AG04450 (cell line): ENCODE measurements at regions of chr3 and their contacts with region 1.

Region 1: DNA sequence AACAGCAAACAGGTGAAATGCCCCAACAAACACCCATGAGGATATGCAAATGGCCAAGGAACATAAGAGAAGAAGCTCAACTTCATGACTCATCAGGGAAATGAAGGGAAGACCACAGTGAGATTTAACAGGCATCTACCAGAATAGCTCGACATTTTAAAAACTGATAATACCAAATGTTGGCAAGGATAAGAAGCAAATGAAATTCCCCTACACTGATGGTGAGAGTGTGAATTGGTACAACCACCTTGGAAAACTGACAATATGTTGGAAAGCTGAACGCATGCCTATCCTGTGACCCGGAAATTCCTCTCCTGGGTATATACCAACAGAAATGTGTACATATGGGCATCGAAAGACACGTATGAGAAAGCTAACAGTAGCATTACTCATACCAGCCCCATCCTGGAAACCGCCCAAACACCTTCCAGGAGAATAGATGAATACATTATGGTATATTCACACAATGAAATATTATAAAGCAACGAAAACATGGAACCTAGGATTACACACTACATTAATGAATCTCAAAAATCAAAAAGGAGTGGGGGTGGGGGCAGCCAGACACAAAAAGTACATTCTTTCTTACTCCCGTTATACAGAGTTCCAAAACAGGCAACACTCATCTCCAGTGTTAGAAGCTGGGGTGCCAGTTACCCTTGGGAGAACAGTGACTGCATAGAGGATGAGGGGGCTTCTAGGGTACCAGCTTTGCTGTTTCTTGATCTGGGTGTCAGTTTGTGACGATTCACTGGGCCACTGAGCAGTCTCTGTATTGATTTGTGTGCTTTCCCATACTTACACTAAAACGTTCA is 16.9 kb downstream of the RFTN1 start:
- DNase-seq: no peak
- H3K4me3 ChIP-seq: no peak overlapping the region
- H3K27ac ChIP-seq: no peak overlapping the region
- H3K27me3 ChIP-seq: no peaks in the 10 kb centered on the region
- CTCF ChIP-seq: no peak

Region 2: GRCh38 chr3:16349986-16350596 is 146.5 kb before region 1 on chr3:
- CTCF ChIA-PET with region 1: no interaction called
- POLR2A ChIA-PET with region 1: no interaction called
- DNase-seq: peak; percentile 58
- H3K4me3 ChIP-seq: no peak overlapping the region
- H3K27ac ChIP-seq: peak overlapping the region; percentile 75
- H3K27me3 ChIP-seq: no peaks in the 10 kb centered on the region
- CTCF ChIP-seq: no peak

Region 3: DNA sequence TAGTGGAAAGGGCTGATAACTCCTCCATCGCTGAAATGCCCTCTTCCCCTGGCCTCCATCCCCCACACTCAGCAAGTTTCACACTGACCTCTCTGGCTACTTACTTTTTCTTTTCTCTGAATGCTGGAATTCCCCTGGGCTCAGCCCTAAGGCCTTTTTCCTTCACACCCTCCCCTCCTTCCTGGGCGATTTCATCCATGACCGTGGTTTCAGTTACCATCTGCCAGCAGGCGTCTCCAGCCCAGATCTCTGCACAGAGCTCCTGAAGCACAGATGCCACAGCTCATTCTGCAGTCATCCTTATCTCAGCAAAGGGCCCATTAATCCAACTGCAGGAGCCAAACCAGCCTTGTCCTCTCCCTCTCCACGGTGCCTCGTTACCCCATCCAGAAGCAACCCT is 97.1 kb before region 1 on chr3:
- CTCF ChIA-PET with region 1: no interaction called
- POLR2A ChIA-PET with region 1: no interaction called
- DNase-seq: peak; percentile 75
- H3K4me3 ChIP-seq: no peak overlapping the region
- H3K27ac ChIP-seq: peak overlapping the region; percentile 71
- H3K27me3 ChIP-seq: no peaks in the 10 kb centered on the region
- CTCF ChIP-seq: peak; percentile 59

Region 4: GRCh38 chr3:16427103-16427965 is 69.3 kb before region 1 on chr3:
- CTCF ChIA-PET with region 1: no interaction called
- POLR2A ChIA-PET with region 1: no interaction called
- DNase-seq: peak; percentile 89
- H3K4me3 ChIP-seq: no peak overlapping the region
- H3K27ac ChIP-seq: peak overlapping the region; percentile 93
- H3K27me3 ChIP-seq: no peaks in the 10 kb centered on the region
- CTCF ChIP-seq: no peak

Region 5: DNA sequence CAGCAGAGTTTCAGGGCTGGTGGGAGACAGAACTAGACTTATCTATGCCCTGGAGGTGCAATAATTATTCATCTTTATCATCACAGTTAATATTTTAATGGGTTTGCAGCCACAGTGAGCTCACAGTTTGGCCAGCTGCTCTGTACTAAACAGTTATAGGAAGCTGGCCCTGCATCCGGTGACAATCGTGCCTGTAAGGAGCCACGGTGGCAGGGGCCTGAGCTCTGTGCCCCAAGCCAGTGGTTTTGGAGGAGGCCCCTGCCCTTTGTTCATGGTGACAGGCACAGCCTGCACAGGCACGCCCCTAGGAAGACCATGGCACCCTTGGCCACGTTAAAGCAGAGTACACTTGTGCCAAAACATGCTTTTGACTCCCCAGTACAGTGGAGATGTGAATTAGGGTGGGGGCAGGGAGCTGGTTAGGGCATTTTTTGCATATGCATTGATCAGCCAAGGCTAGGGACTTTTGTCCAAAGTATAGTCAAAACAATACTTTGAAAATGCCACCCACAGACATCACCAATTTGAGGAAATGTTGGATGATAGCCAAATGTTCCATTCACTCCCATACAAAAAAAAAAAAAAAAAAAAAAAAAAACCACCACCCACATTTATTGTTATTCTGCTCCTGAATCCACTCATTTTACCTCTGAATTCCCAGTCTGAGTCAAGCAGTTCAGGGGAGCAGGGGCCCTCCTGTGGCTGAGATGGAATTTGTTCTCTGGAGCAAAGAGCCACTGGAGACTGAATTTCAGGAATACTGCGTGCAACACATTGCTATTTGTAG is 20.3 kb after region 1 on chr3:
- CTCF ChIA-PET with region 1: interaction called, 10 read pairs
- POLR2A ChIA-PET with region 1: no interaction called
- DNase-seq: peak; percentile 45
- H3K4me3 ChIP-seq: no peak overlapping the region
- H3K27ac ChIP-seq: no peak overlapping the region
- H3K27me3 ChIP-seq: no peaks in the 10 kb centered on the region
- CTCF ChIP-seq: peak; percentile 80

Region 6: GRCh38 chr3:17166369-17166768 is 669.8 kb after region 1 on chr3:
- CTCF ChIA-PET with region 1: no interaction called
- POLR2A ChIA-PET with region 1: no interaction called
- DNase-seq: no peak
- H3K4me3 ChIP-seq: no peak overlapping the region
- H3K27ac ChIP-seq: no peak overlapping the region
- H3K27me3 ChIP-seq: no peaks in the 10 kb centered on the region
- CTCF ChIP-seq: no peak